Activated naive CD4-positive, alpha-beta T cell treated with anti-CD3 and anti-CD28 coated beads for 36 hours (primary cell): ENCODE measurements at regions of chr7 and their contacts with region 1.

Region 1: DNA sequence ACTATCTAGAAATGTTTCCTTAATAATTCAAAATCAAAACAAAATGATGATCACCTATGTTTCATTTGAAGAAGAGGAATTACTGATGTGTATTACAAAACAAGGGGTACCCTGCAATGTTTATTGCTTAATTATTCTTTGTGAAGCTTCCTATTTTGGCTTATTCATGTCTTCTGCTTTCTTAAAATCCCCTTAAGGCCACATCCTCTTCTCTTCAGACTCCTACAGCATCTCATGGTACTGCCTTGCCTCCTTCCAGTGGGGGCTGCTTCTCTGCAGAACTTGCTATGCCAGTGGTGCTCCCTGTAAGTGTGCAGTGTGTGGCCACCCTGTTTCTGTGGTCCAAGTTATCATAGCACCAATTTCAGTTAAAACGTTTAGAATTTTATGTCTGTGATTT is 35.0 kb downstream of the CCDC146 start:
- DNase-seq: no peak
- H3K4me3 Mint-ChIP-seq: no peak overlapping the region
- H3K27ac Mint-ChIP-seq: no peak overlapping the region
- H3K4me1 Mint-ChIP-seq: peaks cover 17% of the 10 kb centered on the region
- H3K27me3 Mint-ChIP-seq: no peaks in the 10 kb centered on the region

Region 2: DNA sequence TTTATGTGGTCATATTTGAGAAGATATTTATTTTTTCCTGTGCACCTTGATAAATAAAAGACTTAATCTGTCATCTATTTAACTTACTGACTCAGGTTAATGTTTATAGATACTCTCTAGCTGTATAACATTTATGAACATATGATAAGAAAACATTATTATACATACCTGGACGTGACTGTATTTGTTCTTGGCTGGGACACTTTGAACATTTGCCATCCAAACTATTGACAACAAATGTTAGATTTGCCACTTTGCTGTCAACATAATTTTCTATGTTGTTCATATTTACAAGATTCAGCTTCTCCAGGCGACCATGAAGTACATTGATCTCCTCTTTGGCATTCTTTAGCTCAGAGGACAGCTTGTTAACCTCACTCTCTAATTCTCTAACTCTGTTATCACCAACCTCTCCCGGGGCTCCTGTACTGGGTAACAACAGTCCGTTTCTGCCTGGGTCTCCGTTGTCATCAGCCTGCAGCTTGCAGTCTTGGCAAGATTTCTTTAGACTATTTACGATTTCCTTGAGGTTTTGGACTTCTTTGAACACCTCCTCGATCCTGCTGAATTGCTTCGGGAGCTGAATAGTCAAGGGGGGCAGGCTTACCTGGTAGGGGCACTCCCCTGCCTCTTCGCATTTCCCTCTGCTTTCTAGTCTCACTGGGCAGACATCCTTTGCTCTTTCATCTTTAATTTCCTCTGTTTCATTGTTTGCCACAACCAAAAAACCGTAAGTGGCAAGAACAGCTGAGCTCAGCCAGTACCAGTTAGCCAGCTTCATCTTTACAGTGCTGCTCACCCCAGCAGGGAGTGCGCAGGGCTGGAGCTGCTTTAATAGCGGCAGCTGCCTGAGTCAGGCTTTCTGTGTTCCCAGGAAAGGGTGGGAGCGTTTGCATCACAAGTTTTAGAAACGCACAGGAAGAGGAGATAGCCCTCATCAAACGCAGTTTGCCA is 41.8 kb after region 1 on chr7 and contains the start of gene FGL2:
- CTCF ChIA-PET with region 1: no interaction called
- intact Hi-C with region 1: loop called (anchors 5 kb)
- DNase-seq: peak; percentile 47
- H3K4me3 Mint-ChIP-seq: peak within 1 kb of the TSS; percentile 74
- H3K27ac Mint-ChIP-seq: no peak within 1 kb of the TSS
- H3K4me1 Mint-ChIP-seq: peaks cover 19% of the 10 kb centered on the region
- H3K27me3 Mint-ChIP-seq: no peaks in the 10 kb centered on the region
- total RNA-seq, gene FGL2: not detected